ENCODE measurements at regions of chr3 and their contacts with region 1.

Region 1: GRCh38 chr3:153043729-153044328 is 118.2 kb upstream of the RAP2B start:
- DNase-seq: peak; percentile 43
- H3K4me3 ChIP-seq: peak overlapping the region in 2 of 3 experiments; percentile 4 to 11
- H3K27ac ChIP-seq: peak overlapping the region; percentile 68
- H3K4me1 ChIP-seq: peaks cover 12% of the 10 kb centered on the region
- H3K27me3 ChIP-seq: no peaks in the 10 kb centered on the region
- CTCF ChIP-seq: no peak
- POLR2A ChIP-seq: no peak

Region 2: DNA sequence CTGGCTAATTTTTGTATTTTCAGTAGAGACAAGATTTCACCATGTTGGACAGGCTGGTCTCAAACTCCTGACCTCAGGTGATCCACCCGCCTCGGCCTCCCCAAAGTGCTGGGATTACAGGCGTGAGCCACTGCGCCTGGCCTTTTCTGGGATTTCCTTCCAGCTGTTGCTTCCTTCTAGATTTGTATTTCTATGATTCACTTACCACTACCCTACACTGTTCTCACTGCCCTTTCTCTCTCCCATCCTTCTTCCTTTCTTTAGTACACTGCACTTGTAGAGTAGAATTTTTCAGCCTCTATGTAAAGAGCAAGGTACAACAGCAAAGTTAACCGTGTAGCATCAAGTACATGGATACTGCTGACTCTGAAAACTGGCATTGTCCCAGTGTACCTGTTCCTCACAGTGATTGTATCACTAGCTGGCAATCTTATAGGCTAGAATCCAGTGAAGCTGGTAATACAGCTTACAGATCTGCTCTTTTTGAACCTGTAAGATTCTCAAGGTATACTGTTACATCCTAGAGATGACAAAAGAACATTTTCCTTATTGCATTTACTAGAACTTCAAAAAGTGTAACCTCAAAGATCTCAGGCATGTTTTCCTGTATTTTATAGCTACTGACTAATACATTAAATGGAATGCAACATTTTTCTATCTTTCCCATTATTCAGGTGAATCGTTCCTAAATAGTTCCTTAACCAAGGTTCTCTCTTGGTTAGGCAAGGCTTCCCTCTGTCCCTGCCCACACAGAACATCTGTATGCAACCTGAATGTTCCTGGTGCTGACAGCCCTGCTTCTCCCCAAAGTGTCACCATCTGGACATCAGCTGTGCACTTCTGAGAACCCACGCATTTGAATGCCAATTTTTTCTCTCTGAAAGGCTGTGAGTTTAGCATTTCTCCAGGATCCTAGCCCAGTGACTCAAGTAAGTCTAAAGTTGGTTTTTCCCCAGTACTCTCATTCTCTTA is 44.1 kb after region 1 on chr3:
- CTCF ChIA-PET with region 1: no interaction called
- POLR2A ChIA-PET with region 1: no interaction called
- dilution Hi-C with region 1: no loop called
- intact Hi-C with region 1: no loop called
- DNase-seq: no peak
- H3K4me3 ChIP-seq: no peak overlapping the region
- H3K27ac ChIP-seq: no peak overlapping the region
- H3K4me1 ChIP-seq: peaks cover 12% of the 10 kb centered on the region
- H3K27me3 ChIP-seq: no peaks in the 10 kb centered on the region
- CTCF ChIP-seq: no peak
- POLR2A ChIP-seq: no peak

Region 3: GRCh38 chr3:153103406-153103945 is 59.6 kb after region 1 on chr3:
- CTCF ChIA-PET with region 1: no interaction called
- POLR2A ChIA-PET with region 1: no interaction called
- dilution Hi-C with region 1: no loop called
- intact Hi-C with region 1: no loop called
- DNase-seq: peak; percentile 18
- H3K4me3 ChIP-seq: no peak overlapping the region
- H3K27ac ChIP-seq: no peak overlapping the region
- H3K4me1 ChIP-seq: no peaks in the 10 kb centered on the region
- H3K27me3 ChIP-seq: no peaks in the 10 kb centered on the region
- CTCF ChIP-seq: no peak
- POLR2A ChIP-seq: no peak

Region 4: GRCh38 chr3:153182501-153183293 is 138.9 kb after region 1 on chr3:
- CTCF ChIA-PET with region 1: interaction called, 4 read pairs
- POLR2A ChIA-PET with region 1: interaction called, 14 read pairs
- dilution Hi-C with region 1: no loop called
- intact Hi-C with region 1: no loop called
- DNase-seq: no peak
- H3K4me3 ChIP-seq: no peak overlapping the region
- H3K27ac ChIP-seq: no peak overlapping the region
- H3K4me1 ChIP-seq: peaks cover 8% of the 10 kb centered on the region
- H3K27me3 ChIP-seq: no peaks in the 10 kb centered on the region
- CTCF ChIP-seq: no peak
- POLR2A ChIP-seq: no peak

Region 5: DNA sequence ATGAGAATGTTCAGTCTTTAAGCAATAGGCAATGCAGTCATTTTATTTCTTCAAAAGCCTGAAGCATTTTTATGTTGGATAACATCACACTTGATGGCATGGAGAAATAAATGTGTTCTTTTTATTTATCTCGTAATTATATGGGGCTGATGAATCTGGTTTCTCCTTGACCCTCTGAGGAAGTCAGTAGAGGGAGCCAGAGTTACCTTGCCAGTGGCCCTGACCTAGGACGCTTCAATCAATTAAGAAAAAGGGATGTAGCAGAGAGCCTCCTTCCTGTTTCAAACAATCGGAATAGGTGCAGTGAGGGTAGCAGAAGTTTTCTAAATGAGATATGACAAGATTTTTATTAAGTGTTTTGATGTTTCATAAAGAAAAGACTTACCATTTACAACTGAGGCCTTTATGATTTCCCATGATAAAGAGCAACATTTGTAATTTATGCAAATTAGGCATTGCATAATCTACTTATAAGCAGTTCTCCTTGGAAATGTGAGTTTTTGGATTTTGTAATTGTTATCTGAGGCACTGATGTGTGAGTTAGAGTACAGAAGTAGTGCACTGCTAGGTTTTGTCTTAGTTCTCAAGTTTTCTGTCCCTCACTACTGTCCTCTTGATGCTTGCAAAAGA is 247.3 kb after region 1 on chr3:
- CTCF ChIA-PET with region 1: interaction called, 17 read pairs
- POLR2A ChIA-PET with region 1: no interaction called
- dilution Hi-C with region 1: no loop called
- intact Hi-C with region 1: loop called (anchors 1 kb)
- DNase-seq: peak; percentile 27
- H3K4me3 ChIP-seq: no peak overlapping the region
- H3K27ac ChIP-seq: no peak overlapping the region
- H3K4me1 ChIP-seq: no peaks in the 10 kb centered on the region
- H3K27me3 ChIP-seq: no peaks in the 10 kb centered on the region
- CTCF ChIP-seq: peak; percentile 17 to 25
- POLR2A ChIP-seq: no peak

Region 6: DNA sequence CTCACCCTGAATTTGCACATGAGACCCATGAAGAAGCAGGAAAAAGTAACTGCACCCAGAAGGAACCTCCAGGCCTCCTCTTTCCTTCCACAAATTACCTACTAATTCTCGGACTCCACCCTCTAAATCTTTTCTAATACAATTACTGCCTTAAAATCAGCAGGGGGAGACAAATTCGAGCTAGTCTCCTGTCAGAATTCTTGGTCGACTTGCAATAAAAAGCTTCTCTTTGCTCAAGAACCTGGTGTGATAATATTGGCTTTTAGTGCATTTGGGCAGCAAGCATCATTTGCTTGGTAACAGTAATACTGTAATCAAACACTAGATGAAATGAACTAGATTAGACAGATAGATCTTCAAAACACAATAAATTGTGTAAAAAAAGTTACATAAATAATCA is 400.1 kb after region 1 on chr3:
- CTCF ChIA-PET with region 1: interaction called, 7 read pairs
- POLR2A ChIA-PET with region 1: no interaction called
- dilution Hi-C with region 1: no loop called
- intact Hi-C with region 1: loop called (anchors 2 kb)
- DNase-seq: peak; percentile 18
- H3K4me3 ChIP-seq: no peak overlapping the region
- H3K27ac ChIP-seq: no peak overlapping the region
- H3K4me1 ChIP-seq: no peaks in the 10 kb centered on the region
- H3K27me3 ChIP-seq: no peaks in the 10 kb centered on the region
- CTCF ChIP-seq: peak; percentile 1 to 6
- POLR2A ChIP-seq: no peak

Region 7: GRCh38 chr3:153628591-153628990 is 584.8 kb after region 1 on chr3:
- CTCF ChIA-PET with region 1: interaction called, 4 read pairs
- POLR2A ChIA-PET with region 1: no interaction called
- dilution Hi-C with region 1: no loop called
- intact Hi-C with region 1: loop called (anchors 2 kb)
- DNase-seq: peak; percentile 98
- H3K4me3 ChIP-seq: no peak overlapping the region
- H3K27ac ChIP-seq: peak overlapping the region; percentile 98
- H3K4me1 ChIP-seq: peaks cover 61% of the 10 kb centered on the region
- H3K27me3 ChIP-seq: no peaks in the 10 kb centered on the region
- CTCF ChIP-seq: no peak
- POLR2A ChIP-seq: no peak

Measured in endothelial cell of umbilical vein (primary cell).